Heart right ventricle (tissue), 16 donors: ENCODE measurements at regions of chr7 and their contacts with region 1.

Region 1: GRCh38 chr7:98365863-98366561 is 34.9 kb downstream of the BAIAP2L1 start:
- DNase-seq: peak; percentile 33 to 80
- ATAC-seq: peak; percentile 90 to 98 (median 96)
- H3K4me3 ChIP-seq: no peak overlapping the region
- H3K27ac ChIP-seq: peak overlapping the region; percentile 45 to 88 (median 69)
- H3K4me1 ChIP-seq: peaks cover 0 to 34% (median 8%) of the 10 kb centered on the region in 9 donors
- H3K27me3 ChIP-seq: no peaks in the 10 kb centered on the region
- CTCF ChIP-seq: no peak

Region 2: DNA sequence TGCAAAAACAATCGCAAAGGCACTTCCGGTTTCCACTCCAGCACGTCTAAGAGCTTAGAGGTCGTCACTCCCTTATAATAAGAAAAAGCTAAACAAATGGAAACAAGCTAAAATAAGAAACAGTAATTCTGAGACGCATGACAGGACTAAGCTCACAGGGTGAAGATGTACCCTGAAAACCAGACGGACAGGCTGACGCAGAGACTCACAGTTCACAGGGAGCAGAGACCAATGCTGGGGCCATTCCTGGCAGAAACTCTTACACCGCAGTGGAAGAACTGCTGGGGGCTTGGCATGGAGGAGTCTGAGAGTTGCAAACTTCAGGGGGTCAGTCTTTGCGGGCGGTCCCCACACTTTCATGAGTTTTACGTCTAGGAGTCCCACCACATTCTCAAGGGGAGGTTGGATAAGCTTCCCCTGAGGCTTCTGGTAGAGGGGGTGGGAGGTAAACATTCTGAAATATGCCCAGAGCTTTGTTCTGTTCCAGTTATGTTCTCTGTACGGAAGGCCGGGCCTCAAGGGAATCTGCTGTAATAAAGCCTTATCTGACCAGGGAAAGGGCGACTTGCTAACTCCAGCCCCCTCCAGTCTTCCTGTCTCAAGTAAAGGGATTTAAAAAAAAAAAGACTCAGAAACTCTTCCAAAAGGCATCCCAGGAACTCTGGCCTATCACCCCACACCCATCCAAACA is 36.8 kb before region 1 on chr7:
- intact Hi-C with region 1: loop called in 2 of 10 experiments (anchors 1 to 2 kb)
- DNase-seq: peak; percentile 29 to 61
- ATAC-seq: peak; percentile 83 to 96 (median 91)
- H3K4me3 ChIP-seq: peak overlapping the region in 3 of 10 donors; percentile 3 to 12 (median 6)
- H3K27ac ChIP-seq: peak overlapping the region; percentile 50 to 88 (median 76)
- H3K4me1 ChIP-seq: peaks cover 2 to 20% (median 10%) of the 10 kb centered on the region in 9 donors
- H3K27me3 ChIP-seq: no peaks in the 10 kb centered on the region
- CTCF ChIP-seq: no peak

Region 3: GRCh38 chr7:99380032-99380822 is 1014.2 kb after region 1 on chr7:
- intact Hi-C with region 1: no loop called
- DNase-seq: peak in 1 of 2 donors; percentile 59
- ATAC-seq: peak; percentile 26 to 72 (median 56)
- H3K4me3 ChIP-seq: peak overlapping the region in 9 of 10 donors; percentile 2 to 50 (median 33)
- H3K27ac ChIP-seq: peak overlapping the region; percentile 61 to 97 (median 89)
- H3K4me1 ChIP-seq: peaks cover 14 to 90% (median 51%) of the 10 kb centered on the region in 9 donors
- H3K27me3 ChIP-seq: no peaks in the 10 kb centered on the region
- CTCF ChIP-seq: no peak